IMR-90 (cell line): ENCODE measurements at regions of chr11 and their contacts with region 1.

Region 1: DNA sequence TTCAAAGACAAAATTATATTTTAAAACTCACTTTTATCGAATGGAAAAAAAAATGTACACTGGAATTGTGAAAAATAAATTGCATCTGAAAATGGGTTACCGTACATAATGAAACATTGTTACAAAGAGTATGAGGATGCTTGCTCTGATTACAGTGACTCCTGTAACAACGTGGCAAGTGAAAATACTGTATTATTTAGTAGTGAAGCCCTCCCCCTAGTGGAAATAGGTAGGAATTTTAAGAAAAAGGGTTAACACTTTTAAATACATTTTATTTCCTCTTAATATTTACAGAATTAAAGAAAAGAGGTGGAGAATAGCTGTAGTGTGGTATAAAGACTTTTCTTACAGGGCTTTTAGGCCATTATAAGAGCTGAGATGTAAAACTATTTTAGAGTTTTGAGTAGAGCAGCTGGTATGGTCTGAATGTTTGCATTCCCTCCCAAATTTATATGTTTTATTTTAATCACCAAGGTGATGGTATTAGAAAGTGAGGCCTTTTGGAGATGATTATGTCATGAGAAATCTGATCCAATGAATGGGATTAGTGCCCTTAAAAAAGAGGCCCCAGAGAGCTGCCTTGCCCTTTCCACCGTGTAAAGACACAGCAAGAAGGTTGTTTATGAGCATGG is 25.2 kb downstream of the FAM76B start:
- DNase-seq: peak; percentile 67
- ATAC-seq: peak; percentile 82
- H3K4me3 ChIP-seq: no peak overlapping the region
- H3K27ac ChIP-seq: no peak overlapping the region
- H3K4me1 ChIP-seq: peaks cover 2% of the 10 kb centered on the region; the same call in 1 of the 2 replicates
- H3K27me3 ChIP-seq: peaks cover 9% of the 10 kb centered on the region
- CTCF ChIP-seq: peak; percentile 75
- POLR2A ChIP-seq: no peak
- RAD21 ChIP-seq: peak; percentile 71

Region 2: GRCh38 chr11:95067039-95067840 is 697.1 kb before region 1 on chr11:
- CTCF ChIA-PET with region 1: no interaction called
- POLR2A ChIA-PET with region 1: no interaction called
- dilution Hi-C with region 1: no loop called
- in situ Hi-C with region 1: no loop called
- intact Hi-C with region 1: loop called (anchors 1 kb)
- DNase-seq: peak; percentile 72
- ATAC-seq: peak; percentile 90
- H3K4me3 ChIP-seq: peak overlapping the region; percentile 91
- H3K27ac ChIP-seq: peak overlapping the region; percentile 85
- H3K4me1 ChIP-seq: no peaks in the 10 kb centered on the region
- H3K27me3 ChIP-seq: no peaks in the 10 kb centered on the region
- CTCF ChIP-seq: peak; percentile 65
- POLR2A ChIP-seq: peak; percentile 57
- RAD21 ChIP-seq: peak; percentile 24; the same call in 1 of the 2 replicates

Region 3: DNA sequence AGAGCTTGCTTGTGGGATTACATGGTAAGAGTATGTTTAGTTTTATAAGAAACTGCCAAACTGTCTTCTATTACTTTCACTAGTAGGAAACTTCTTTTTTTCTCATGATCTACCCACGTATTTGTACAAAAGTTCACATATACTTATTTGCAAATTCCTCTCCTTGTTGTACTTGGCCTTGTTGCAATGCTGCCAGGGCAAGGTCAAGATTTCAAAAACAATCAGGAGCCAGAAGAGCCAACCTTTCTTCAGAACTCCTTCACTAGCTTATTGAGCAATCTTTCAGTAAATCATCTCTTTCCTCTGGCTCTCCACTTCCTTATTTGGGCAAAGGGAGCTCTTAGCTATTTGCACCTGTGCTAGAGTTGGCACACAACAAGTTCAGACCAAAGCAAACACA is 688.0 kb before region 1 on chr11:
- CTCF ChIA-PET with region 1: no interaction called
- POLR2A ChIA-PET with region 1: no interaction called
- dilution Hi-C with region 1: no loop called
- in situ Hi-C with region 1: loop called (anchors 5 kb)
- intact Hi-C with region 1: no loop called
- DNase-seq: peak; percentile 75
- ATAC-seq: peak; percentile 67
- H3K4me3 ChIP-seq: no peak overlapping the region
- H3K27ac ChIP-seq: 0 out of 2 replicates have a peak overlapping the region, but pooled peaks have one; percentile 11
- H3K4me1 ChIP-seq: peaks cover 3% of the 10 kb centered on the region; the same call in 1 of the 2 replicates
- H3K27me3 ChIP-seq: no peaks in the 10 kb centered on the region
- CTCF ChIP-seq: no peak
- POLR2A ChIP-seq: no peak
- RAD21 ChIP-seq: no peak